ENCODE measurements at regions of chr20 and their contacts with region 1.

Region 1: DNA sequence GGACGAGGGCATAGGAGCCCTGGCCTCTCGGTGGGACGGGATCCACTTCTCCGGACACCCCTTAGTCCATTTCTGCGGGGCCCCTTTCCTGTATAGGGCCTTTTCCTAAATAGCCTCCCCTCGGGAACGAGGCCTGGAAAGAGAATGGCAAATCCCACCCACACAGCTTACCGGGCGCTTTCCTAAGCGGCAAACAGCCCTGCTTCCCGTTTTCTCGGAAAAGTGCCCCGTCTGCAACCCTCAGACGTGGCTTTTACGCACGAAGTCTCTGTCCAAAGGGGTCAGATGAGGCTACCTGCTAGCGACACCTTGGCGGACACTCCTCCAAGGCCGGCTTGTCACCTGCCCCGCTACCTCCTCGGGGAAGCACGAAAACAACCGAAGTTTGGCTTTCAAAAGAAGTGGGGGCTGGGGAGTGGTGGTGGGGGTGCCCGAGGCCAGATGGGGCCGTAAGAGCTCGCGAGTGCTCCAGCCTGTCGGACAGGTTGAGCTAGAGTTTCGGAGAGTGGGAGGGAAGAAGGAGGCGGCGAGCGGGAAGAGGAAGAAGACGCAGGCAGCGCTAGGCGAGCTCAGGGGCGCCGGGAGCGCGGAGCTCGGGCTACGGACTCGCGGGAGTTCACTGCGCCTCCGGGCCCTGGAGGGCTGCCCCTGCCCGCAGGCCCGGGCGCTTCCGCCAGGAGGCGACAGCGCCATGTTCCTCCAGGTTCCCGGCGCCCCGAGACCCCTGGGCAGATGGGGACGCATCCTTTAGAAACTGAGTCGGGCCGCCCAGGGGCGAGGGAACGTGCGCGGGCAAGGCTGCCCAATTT is 768 bp downstream of the TFAP2C start:
- DNase-seq: peak; percentile 97
- ATAC-seq: peak; percentile 50
- H3K4me3 ChIP-seq: peak overlapping the region; percentile 84
- H3K27ac ChIP-seq: peak overlapping the region; percentile 82
- H3K4me1 ChIP-seq: peaks cover 30% of the 10 kb centered on the region
- H3K27me3 ChIP-seq: no peaks in the 10 kb centered on the region
- CTCF ChIP-seq: peak; percentile 90

Region 2: DNA sequence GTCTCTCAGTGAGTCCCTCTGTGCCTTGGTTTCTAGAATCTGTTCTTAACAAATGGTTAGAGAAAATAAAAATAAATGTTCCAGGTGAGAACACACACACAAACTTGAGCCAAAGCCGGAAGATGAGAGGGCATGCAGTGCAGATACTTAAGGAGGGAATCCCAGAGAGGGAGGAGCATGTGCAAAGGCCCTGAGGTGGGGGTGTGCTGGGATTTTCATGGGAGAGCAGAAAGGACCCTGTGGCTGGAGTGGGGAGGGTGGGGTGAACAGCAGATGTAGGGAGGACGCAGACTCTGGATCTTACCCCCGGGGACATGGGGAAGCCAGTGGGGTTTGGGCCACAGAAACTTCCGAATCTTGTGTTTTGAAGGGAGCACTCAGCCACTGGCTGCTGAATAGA is 16.7 kb after region 1 on chr20:
- CTCF ChIA-PET with region 1: no interaction called
- POLR2A ChIA-PET with region 1: interaction called, 13 read pairs
- intact Hi-C with region 1: no loop called
- DNase-seq: no peak
- ATAC-seq: no peak
- H3K4me3 ChIP-seq: no peak overlapping the region
- H3K27ac ChIP-seq: no peak overlapping the region
- H3K4me1 ChIP-seq: no peaks in the 10 kb centered on the region
- H3K27me3 ChIP-seq: no peaks in the 10 kb centered on the region
- CTCF ChIP-seq: no peak

Region 3: GRCh38 chr20:56711013-56711412 is 81.1 kb after region 1 on chr20:
- CTCF ChIA-PET with region 1: interaction called, 3 read pairs
- POLR2A ChIA-PET with region 1: no interaction called
- intact Hi-C with region 1: loop called (anchors 1 kb)
- DNase-seq: peak; percentile 97
- ATAC-seq: peak; percentile 92
- H3K4me3 ChIP-seq: no peak overlapping the region
- H3K27ac ChIP-seq: peak overlapping the region; percentile 87
- H3K4me1 ChIP-seq: peaks cover 14% of the 10 kb centered on the region
- H3K27me3 ChIP-seq: no peaks in the 10 kb centered on the region
- CTCF ChIP-seq: no peak

Region 4: DNA sequence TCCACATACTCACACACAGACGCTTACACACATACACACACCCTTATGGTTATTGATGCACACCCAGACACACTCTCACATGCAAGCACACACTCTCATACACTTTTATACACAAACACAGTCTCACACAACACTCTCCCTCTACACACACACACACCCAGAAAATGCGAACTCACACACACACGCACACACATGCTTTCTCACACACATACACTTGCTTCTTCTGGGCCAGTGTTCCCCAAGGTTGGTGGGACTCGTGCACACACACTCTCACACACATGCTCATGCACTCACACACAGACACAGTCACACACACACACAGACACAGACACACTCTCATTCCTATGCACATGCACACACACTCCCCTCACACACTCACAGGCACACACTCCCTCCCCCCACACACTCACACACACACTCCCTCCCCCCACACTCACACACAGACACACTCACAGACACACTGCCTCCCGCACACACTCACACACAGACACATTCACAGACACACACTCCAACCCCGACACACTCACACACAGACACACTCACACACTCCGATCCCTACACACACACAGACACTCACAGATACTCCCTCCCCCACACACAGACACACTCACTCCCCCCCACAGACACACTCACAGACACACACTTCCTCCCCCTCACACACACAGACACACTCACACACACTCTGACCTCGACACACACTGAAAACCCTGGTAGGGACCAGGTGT is 175.3 kb after region 1 on chr20:
- CTCF ChIA-PET with region 1: interaction called, 3 read pairs
- POLR2A ChIA-PET with region 1: no interaction called
- intact Hi-C with region 1: loop called (anchors 1 kb)
- DNase-seq: no peak
- ATAC-seq: no peak
- H3K4me3 ChIP-seq: peak overlapping the region; percentile 36
- H3K27ac ChIP-seq: peak overlapping the region; percentile 93
- H3K4me1 ChIP-seq: peaks cover 36% of the 10 kb centered on the region
- H3K27me3 ChIP-seq: no peaks in the 10 kb centered on the region
- CTCF ChIP-seq: no peak

Region 5: DNA sequence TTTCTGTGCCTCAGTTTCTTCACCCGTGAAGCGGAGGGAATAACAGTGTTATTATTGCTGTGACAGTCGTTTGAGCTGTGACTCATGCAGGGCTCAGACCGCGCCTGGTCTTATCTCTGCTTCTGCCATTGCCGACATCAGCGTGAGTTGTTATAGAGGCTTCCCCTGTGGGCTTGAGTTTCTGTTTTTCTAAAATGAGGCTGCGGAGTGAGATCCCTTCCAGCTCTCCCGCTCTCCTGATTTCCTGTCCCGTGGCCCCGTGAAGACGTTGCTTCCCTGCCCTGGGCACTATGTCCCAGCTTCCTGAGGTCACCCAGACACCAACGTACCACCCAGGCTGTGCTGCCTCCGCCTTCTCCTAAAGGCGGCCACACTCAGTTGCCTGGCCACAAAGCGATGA is 358.1 kb after region 1 on chr20:
- CTCF ChIA-PET with region 1: no interaction called
- POLR2A ChIA-PET with region 1: no interaction called
- intact Hi-C with region 1: loop called (anchors 5 kb)
- DNase-seq: peak; percentile 80
- ATAC-seq: peak; percentile 69
- H3K4me3 ChIP-seq: peak overlapping the region; percentile 69
- H3K27ac ChIP-seq: peak overlapping the region; percentile 88
- H3K4me1 ChIP-seq: peaks cover 55% of the 10 kb centered on the region
- H3K27me3 ChIP-seq: no peaks in the 10 kb centered on the region
- CTCF ChIP-seq: no peak